Posterior vena cava (tissue), 2 donors: ENCODE measurements at regions of chr16 and their contacts with region 1.

Region 1: GRCh38 chr16:28277537-28278388 is 14.6 kb upstream of the SBK1 start:
- DNase-seq: peak; percentile 96

Region 2: DNA sequence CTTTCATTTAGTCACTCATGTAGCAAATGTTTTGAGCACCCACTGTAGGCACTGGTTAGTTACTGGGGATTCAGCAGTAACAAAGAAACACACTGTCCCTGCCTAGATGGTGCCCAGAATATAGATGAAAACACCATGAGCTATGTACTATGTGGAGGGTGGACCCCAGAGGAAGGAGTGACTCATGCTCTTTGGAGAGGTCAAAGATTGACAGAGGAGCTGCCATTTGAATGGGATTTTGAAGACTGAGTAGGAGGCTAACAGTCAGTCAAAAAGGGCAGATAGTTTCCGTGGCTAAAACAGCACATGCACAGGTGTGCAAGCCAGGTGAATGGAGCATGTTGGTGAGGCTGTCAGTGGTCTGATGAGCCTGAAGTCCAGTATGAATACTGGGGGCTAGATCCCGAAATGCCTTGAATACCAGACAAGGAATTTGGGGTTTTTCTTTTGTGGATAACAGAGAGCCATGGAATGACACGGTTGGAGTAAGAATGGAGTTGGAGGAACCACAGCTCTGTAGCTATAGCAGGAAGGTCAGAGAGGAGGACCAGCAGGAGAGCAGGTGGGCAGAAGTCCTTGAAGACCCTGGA is 869.7 kb before region 1 on chr16:
- intact Hi-C with region 1: no loop called
- DNase-seq: no peak

Region 3: GRCh38 chr16:27582883-27583282 is 694.9 kb before region 1 on chr16:
- intact Hi-C with region 1: loop called in 1 of 2 experiments (anchors 5 kb)
- DNase-seq: no peak

Region 4: DNA sequence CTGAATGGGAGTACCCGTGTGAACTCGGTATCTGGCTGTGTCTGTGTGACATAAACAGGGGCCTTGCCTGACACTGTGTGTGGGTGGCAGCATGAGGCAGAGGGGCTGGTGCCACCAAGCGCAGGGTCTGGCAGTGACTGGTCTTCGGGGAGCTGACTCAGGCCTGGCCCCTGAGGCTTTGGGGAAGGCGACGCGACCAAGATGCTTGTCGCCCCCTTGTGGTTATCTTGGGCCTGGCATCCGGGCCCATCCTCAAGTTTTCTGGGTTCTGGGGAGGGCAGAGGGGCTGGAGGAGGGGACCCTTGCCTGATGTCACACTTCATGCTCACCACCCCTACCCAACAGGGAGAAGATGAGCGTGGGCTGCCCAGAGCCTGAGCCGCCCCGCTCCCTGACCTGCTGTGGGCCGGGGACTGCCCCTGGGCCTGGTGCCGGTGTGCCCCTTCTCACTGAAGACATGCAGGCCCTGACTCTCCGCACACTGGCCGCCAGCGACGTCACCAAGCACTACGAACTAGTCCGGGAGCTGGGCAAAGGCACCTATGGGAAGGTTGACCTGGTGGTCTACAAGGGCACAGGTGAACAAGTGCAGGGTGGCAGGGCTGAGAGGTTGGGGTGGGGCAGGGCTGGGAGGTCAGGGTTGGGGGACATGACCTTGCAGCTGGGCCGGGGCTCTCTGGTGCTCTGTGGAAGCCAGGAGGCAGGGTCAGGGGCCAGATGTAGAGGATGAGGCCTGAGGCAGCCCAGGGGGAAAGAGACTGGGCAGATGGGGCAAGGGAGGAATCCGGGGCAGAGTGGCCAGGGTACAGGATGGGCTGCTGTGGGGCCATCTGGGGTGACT is 39.5 kb after region 1 on chr16:
- intact Hi-C with region 1: loop called (anchors 2 to 5 kb)
- DNase-seq: peak; percentile 81